WTC11 (cell line): ENCODE measurements at regions of chr1 and their contacts with region 1.

Region 1: DNA sequence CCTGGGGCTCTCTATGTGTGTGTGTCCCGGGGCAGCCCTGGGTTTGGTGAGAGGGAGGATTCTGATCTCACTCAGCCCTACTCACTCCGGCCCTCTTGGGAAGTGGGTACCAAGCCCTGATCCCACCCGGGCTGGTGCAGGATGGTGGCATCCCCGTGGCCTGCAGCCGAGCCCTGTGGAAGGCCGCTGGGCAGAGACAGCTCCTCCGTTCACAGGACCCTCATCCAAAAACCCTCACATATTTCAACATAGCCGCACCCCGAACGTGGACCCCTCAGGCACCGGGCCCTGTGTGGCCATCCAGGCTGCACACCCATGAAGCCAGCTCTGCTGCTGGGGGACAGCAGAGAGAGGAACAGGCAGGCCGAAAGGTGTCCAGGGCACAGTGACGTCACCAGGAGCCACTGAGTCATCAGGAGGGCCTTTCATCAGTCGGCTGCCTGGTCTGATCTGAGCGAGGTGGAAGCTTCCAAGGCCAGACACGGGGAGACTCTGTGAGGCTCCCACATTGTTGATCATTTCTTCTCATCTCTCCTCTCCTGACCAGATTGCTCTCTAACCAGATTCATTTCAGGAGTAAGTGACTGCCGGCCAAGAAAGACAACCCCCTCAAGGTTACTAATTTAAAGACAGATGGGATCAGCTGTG is 16.2 kb upstream of the GPR157 start:
- DNase-seq: no peak
- ATAC-seq: no peak
- H3K4me3 Mint-ChIP-seq: no peak overlapping the region
- H3K27ac Mint-ChIP-seq: no peak overlapping the region
- H3K4me1 Mint-ChIP-seq: peaks cover 7% of the 10 kb centered on the region; the same call in 1 of the 2 replicates
- H3K27me3 Mint-ChIP-seq: no peaks in the 10 kb centered on the region
- CTCF ChIP-seq: no peak

Region 2: GRCh38 chr1:9133870-9134585 is 11.1 kb before region 1 on chr1:
- CTCF ChIA-PET with region 1: interaction called, 33 read pairs
- POLR2A ChIA-PET with region 1: interaction called, 3 read pairs
- DNase-seq: no peak
- ATAC-seq: no peak
- H3K4me3 Mint-ChIP-seq: no peak overlapping the region
- H3K27ac Mint-ChIP-seq: no peak overlapping the region
- H3K4me1 Mint-ChIP-seq: 0 out of 2 replicates have a peak, but pooled peaks cover 3% of the 10 kb centered on the region
- H3K27me3 Mint-ChIP-seq: no peaks in the 10 kb centered on the region; the same call in none of the 2 replicates
- CTCF ChIP-seq: no peak

Region 3: DNA sequence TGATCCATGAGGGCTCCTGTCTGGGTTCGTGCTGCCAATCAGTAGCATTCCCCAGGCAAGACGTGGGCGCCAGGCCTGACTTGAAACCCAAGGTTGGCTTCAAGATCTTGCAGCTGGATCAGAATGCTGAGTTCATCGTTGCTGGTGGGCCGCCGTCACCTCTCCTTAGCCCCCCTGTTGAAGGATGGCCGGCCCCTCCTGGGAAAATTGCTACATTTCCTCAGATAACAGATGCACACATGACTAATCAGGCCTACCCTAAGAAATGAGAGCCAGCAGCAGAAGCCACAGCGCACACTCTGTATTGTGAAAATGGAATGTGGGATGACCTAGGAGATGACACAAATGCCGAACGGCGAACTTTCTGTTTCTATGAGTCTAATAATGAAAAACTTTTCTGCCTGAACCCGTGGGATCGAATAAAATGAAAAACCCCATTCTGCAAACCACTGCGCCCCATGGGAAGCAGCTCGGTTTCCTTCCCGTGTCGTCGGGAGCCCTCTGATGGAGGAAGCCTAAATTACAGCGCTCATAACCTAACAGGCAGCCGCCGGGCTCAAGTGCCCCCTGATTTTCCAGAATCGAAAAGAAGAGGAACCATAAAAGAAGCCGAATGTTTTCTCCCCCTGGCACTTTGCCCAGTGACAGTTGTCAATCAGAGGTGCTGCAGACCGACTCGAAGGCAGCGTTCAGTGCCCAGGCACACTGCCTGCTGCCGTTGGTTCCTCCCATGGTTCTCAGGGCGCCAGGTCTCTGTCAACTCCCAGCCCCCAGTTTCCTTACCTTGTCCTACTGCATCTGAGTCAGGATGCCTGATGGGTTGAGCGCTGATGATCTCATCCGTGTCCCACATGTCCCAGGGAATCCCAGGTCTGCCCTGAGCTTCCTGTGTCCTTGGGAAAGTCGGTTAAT is 51.2 kb after region 1 on chr1:
- CTCF ChIA-PET with region 1: interaction called, 29 read pairs
- POLR2A ChIA-PET with region 1: no interaction called
- DNase-seq: peak; percentile 75
- ATAC-seq: peak; percentile 48
- H3K4me3 Mint-ChIP-seq: no peak overlapping the region
- H3K27ac Mint-ChIP-seq: no peak overlapping the region
- H3K4me1 Mint-ChIP-seq: peaks cover 16% of the 10 kb centered on the region
- H3K27me3 Mint-ChIP-seq: peaks cover 48% of the 10 kb centered on the region
- CTCF ChIP-seq: peak; percentile 40; the same call in 1 of the 2 replicates

Region 4: DNA sequence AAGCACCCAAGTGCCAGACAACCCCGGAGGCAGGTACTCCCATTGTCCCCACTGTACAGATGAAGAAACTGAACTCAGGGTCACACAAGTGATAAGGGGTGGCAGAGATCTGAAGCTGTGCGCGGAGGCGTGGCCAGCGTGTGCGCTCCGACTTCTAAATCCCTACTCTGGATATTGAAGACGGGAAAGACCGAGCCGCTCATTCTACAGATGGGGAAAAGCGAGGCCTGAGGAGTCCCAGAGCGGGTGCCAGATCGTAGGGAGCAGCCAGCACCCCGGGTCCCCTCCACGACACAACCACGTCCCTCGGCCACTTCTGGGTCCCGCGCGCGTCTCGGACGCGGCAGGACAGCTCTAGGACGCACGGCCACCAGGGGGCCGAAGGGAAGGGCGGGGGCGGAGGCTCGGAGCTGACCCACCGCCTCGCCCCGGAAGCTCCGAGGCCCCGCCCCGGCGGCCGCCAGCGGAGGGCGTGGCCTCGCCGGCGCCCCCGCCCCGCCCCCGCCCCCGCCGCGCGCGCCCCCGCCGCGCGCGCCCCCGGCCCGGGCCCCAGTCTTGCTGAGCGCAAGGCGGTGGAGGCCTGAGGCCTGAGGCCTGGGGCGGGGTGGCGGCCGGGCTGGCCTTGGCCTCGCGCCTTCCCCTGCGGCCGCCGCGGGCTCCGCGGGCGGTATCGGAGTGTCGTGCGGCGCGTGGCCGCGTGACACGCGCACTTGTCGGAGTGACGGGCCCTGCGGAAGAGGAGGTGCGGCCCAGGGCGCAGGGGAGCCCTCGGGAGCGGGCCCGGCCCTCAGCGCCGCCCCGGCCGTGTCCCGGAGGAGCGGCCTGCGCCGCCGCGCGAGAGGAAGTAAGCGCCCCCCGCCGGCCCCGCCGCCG is 89.3 kb after region 1 on chr1 and contains the start of gene H6PD:
- CTCF ChIA-PET with region 1: interaction called, 15 read pairs
- POLR2A ChIA-PET with region 1: no interaction called
- DNase-seq: peak; percentile 76
- ATAC-seq: peak; percentile 82
- H3K4me3 Mint-ChIP-seq: peak within 1 kb of the TSS; percentile 85
- H3K27ac Mint-ChIP-seq: peak within 1 kb of the TSS; percentile 72
- H3K4me1 Mint-ChIP-seq: peaks cover 15% of the 10 kb centered on the region
- H3K27me3 Mint-ChIP-seq: peaks cover 2% of the 10 kb centered on the region; the same call in 1 of the 2 replicates
- CTCF ChIP-seq: no peak
- total RNA-seq, gene H6PD: 7.4 to 7.9 TPM (median 7.8 TPM) in 3 replicates

Region 5: GRCh38 chr1:9302745-9303524 is 157.8 kb after region 1 on chr1:
- CTCF ChIA-PET with region 1: no interaction called
- POLR2A ChIA-PET with region 1: no interaction called
- DNase-seq: no peak
- ATAC-seq: no peak
- H3K4me3 Mint-ChIP-seq: no peak overlapping the region
- H3K27ac Mint-ChIP-seq: peak overlapping the region; percentile 15
- H3K4me1 Mint-ChIP-seq: no peaks in the 10 kb centered on the region
- H3K27me3 Mint-ChIP-seq: no peaks in the 10 kb centered on the region
- CTCF ChIP-seq: no peak